Heart right ventricle (tissue), 16 donors: ENCODE measurements at regions of chr11 and their contacts with region 1.

Region 1: GRCh38 chr11:121194731-121195596 is 93.9 kb downstream of the TECTA start:
- DNase-seq: peak in 1 of 2 donors; percentile 57
- ATAC-seq: peak; percentile 61 to 83 (median 76)
- H3K4me3 ChIP-seq: no peak overlapping the region
- H3K27ac ChIP-seq: no peak overlapping the region
- H3K4me1 ChIP-seq: peaks cover 0 to 11% (median 0%) of the 10 kb centered on the region in 9 donors
- H3K27me3 ChIP-seq: peaks cover 0 to 31% (median 24%) of the 10 kb centered on the region in 7 donors
- CTCF ChIP-seq: peak; percentile 66 to 90 (median 83)

Region 2: GRCh38 chr11:120929664-120930154 is 265.3 kb before region 1 on chr11:
- intact Hi-C with region 1: loop called in 2 of 10 experiments (anchors 5 to 10 kb)
- DNase-seq: peak in 1 of 2 donors; percentile 42
- ATAC-seq: peak; percentile 31 to 85 (median 73)
- H3K4me3 ChIP-seq: no peak overlapping the region
- H3K27ac ChIP-seq: no peak overlapping the region
- H3K4me1 ChIP-seq: no peaks in the 10 kb centered on the region
- H3K27me3 ChIP-seq: peaks cover 0 to 24% (median 5%) of the 10 kb centered on the region in 7 donors
- CTCF ChIP-seq: peak; percentile 21 to 69 (median 51)

Region 3: DNA sequence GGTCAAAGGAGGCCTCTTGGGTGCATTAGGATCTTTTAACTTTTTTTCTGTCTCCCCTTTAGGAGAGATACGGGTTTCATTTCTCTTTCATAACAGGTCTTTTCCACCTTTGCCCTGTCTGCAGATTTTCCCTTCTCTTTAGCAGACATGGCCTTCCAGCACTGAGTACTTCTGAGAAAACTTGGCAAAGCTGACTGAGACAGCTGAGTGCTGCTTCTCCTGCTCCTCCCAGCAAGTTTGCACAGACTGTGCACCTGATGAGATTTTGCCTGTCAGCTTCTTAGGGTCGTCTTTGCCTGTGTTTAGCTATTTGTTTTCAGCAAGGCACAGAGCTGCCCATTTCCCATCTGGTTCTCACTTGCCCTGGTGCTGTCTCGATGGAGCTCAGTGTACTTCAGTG is 258.6 kb before region 1 on chr11:
- intact Hi-C with region 1: loop called in 3 of 10 experiments (anchors 5 to 10 kb)
- DNase-seq: no peak
- ATAC-seq: no peak
- H3K4me3 ChIP-seq: no peak overlapping the region
- H3K27ac ChIP-seq: no peak overlapping the region
- H3K4me1 ChIP-seq: no peaks in the 10 kb centered on the region
- H3K27me3 ChIP-seq: peaks cover 0 to 77% (median 18%) of the 10 kb centered on the region in 7 donors
- CTCF ChIP-seq: no peak

Region 4: DNA sequence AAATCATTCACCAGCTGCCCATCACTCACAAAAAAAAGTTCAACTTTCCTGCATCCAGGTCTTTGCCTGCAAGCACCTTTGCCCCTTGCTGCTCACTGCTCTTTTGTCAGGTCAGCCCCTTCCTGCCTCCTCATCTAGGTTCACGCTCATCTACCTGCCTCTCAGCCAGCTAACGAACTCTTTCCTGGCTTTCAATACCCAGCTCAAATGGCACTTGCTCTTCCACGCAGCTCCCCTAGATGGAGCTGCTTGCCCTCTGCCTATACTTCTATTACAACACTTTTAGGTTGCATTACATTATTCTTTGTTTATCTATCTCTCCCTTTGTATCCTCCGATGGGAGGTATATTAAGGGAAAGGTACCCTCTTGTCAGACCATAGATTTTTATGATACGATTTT is 249.9 kb before region 1 on chr11:
- intact Hi-C with region 1: loop called in 1 of 10 experiments (anchors 10 kb)
- DNase-seq: no peak
- ATAC-seq: no peak
- H3K4me3 ChIP-seq: no peak overlapping the region
- H3K27ac ChIP-seq: no peak overlapping the region
- H3K4me1 ChIP-seq: no peaks in the 10 kb centered on the region
- H3K27me3 ChIP-seq: peaks cover 0 to 71% (median 26%) of the 10 kb centered on the region in 7 donors
- CTCF ChIP-seq: peak in 3 of 9 donors; percentile 15 to 23 (median 21)

Region 5: DNA sequence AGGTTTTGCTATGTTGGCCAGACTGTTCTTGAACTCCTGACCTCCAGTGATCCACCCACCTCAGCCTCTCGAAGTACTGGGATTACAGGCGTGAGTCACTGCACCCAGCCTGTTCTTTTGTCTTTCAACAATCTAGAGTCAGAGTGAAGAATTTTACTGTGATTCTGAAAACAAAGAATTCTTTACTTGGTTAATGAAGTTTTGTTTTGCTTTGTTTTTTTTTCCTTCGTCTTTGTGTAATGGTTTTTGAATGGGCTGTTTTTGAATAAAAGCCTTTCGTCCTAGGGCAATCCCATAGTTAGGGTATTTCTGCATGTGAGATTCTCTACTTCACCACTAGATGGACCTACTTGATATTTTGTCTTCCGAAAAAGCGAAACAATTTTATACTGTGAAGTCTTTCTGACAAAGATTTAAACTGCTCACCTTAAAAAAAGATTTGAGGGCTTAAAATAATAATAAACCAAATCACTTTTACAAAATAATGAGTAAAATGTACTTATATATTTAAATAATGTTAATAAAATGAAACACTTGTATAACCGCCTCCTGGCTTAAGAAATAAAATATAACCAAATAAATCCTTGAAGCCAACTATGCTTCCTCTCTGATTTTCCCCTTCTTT is 54.2 kb after region 1 on chr11:
- intact Hi-C with region 1: no loop called
- DNase-seq: no peak
- ATAC-seq: peak in 3 of 8 donors; percentile 57 to 67 (median 62)
- H3K4me3 ChIP-seq: no peak overlapping the region
- H3K27ac ChIP-seq: no peak overlapping the region
- H3K4me1 ChIP-seq: peaks cover 0 to 9% (median 0%) of the 10 kb centered on the region in 9 donors
- H3K27me3 ChIP-seq: peaks cover 0 to 6% (median 0%) of the 10 kb centered on the region in 7 donors
- CTCF ChIP-seq: peak; percentile 39 to 83 (median 76)